Left colon (tissue), 2 donors: ENCODE measurements at regions of chr13 and their contacts with region 1.

Region 1: GRCh38 chr13:84917252-84917878 is 881.9 kb downstream of the SLITRK6 start:
- DNase-seq: no peak
- ATAC-seq: no peak

Region 2: DNA sequence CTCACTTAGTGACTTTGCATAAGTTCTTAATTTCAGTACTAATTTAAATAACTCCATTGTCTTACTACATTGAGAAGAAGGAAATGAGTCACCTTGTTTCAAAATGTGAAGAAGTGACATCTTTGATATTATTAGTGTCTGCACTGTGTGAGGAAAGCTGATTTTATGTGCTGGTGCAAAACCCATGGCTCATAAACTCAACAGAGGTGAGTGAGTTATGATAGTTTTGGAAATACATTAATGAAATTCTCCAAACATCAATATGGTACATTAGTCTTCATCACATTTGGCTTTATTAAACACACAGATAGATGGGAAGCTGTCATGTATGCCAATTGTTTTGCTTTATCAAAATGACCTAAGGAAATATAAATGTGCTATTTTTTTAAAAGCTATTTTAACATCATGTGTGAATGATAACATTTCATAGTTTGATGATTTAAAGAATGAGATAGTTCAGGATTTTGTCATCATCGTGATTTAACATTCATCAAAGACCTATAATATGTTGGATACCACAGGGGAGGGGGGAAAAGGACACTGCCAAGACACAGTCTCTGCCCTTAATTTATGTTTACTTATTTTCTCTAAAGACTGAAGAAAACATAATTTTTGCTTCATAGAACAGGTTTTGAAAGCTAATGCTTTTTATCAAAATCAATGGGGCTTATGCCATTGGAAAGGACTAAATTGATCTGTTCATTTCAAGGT is 132.8 kb before region 1 on chr13:
- intact Hi-C with region 1: no loop called
- DNase-seq: no peak
- ATAC-seq: no peak

Region 3: GRCh38 chr13:85148009-85148408 is 230.6 kb after region 1 on chr13:
- intact Hi-C with region 1: no loop called
- DNase-seq: no peak
- ATAC-seq: no peak

Region 4: GRCh38 chr13:85806553-85807175 is 889.3 kb after region 1 on chr13:
- intact Hi-C with region 1: loop called in 1 of 2 experiments (anchors 5 kb)
- DNase-seq: no peak
- ATAC-seq: peak; percentile 53